Activated B cell treated with CpG ODN at 0.5 μM for 24 hours (primary cell): ENCODE measurements at regions of chr16 and their contacts with region 1.

Region 1: GRCh38 chr16:68229431-68230198 is 6.3 kb downstream of the ESRP2 start:
- DNase-seq: no peak
- ATAC-seq: peak; percentile 63
- H3K4me3 Mint-ChIP-seq: no peak overlapping the region
- H3K27ac Mint-ChIP-seq: peak overlapping the region; percentile 41
- H3K4me1 Mint-ChIP-seq: peaks cover 35% of the 10 kb centered on the region
- H3K27me3 Mint-ChIP-seq: no peaks in the 10 kb centered on the region
- CTCF ChIP-seq: peak; percentile 29

Region 2: DNA sequence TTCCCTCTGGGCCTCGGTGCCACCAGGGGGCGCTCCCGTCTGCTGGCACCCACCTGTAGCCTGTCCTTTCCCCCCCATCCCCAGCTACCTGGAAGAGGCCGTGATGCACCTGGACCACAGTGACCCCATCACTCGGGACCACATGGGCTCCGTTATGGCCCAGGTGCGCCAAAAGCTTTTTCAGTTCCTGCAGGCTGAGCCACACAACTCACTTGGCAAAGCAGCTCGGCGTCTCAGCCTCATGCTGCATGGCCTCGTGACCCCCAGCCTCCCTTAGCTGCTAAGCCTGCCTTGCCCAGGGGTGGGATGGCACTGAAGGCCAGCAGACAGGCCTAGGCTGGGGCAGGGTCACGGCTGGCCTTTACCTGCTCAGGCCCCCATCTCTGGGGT is 345.7 kb before region 1 on chr16:
- CTCF ChIA-PET with region 1: interaction called, 12 read pairs
- POLR2A ChIA-PET with region 1: no interaction called
- intact Hi-C with region 1: loop called (anchors 1 kb)
- DNase-seq: peak; percentile 75
- ATAC-seq: peak; percentile 90
- H3K4me3 Mint-ChIP-seq: no peak overlapping the region
- H3K27ac Mint-ChIP-seq: no peak overlapping the region
- H3K4me1 Mint-ChIP-seq: no peaks in the 10 kb centered on the region
- H3K27me3 Mint-ChIP-seq: no peaks in the 10 kb centered on the region
- CTCF ChIP-seq: peak; percentile 63

Region 3: GRCh38 chr16:67928561-67929364 is 300.9 kb before region 1 on chr16:
- CTCF ChIA-PET with region 1: no interaction called
- POLR2A ChIA-PET with region 1: no interaction called
- intact Hi-C with region 1: loop called (anchors 2 kb)
- DNase-seq: peak; percentile 64
- ATAC-seq: peak; percentile 90
- H3K4me3 Mint-ChIP-seq: no peak overlapping the region
- H3K27ac Mint-ChIP-seq: no peak overlapping the region
- H3K4me1 Mint-ChIP-seq: peaks cover 36% of the 10 kb centered on the region
- H3K27me3 Mint-ChIP-seq: no peaks in the 10 kb centered on the region
- CTCF ChIP-seq: peak; percentile 43

Region 4: DNA sequence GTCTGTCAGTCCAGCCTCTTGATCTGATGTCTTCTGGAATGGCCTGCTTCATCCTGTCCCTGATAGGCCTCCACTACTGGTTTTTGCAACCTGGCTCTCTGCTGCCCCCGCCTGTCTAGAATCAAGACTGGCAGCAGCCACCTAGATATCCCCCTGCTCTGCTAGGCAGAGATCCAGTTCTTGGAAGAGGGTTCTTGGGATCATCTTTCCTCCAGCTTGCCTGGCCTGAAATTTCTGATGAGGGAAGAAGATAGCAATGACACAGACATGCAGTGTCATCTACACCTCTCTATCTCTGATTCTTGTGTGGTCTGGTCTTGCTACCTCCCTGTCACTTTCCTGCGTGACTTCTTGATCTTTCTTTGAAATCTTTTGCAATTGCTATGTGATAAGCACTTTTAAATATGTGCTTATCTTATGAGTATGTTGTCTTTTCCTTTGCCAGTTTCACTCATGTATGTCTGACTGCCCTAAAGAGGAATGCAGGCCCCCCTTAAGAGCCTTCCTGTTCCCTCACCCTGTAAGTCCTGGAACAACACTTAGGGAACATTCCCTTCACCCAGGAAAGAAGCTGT is 164.7 kb before region 1 on chr16:
- CTCF ChIA-PET with region 1: interaction called, 6 read pairs
- POLR2A ChIA-PET with region 1: no interaction called
- intact Hi-C with region 1: loop called (anchors 1 kb)
- DNase-seq: peak; percentile 52
- ATAC-seq: peak; percentile 93
- H3K4me3 Mint-ChIP-seq: no peak overlapping the region
- H3K27ac Mint-ChIP-seq: no peak overlapping the region
- H3K4me1 Mint-ChIP-seq: peaks cover 27% of the 10 kb centered on the region
- H3K27me3 Mint-ChIP-seq: no peaks in the 10 kb centered on the region
- CTCF ChIP-seq: no peak

Region 5: GRCh38 chr16:68093816-68094613 is 135.6 kb before region 1 on chr16:
- CTCF ChIA-PET with region 1: interaction called, 42 read pairs
- POLR2A ChIA-PET with region 1: interaction called, 3 read pairs
- intact Hi-C with region 1: loop called (anchors 1 kb)
- DNase-seq: no peak
- ATAC-seq: peak; percentile 67
- H3K4me3 Mint-ChIP-seq: peak overlapping the region; percentile 6
- H3K27ac Mint-ChIP-seq: peak overlapping the region; percentile 65
- H3K4me1 Mint-ChIP-seq: peaks cover 87% of the 10 kb centered on the region
- H3K27me3 Mint-ChIP-seq: no peaks in the 10 kb centered on the region
- CTCF ChIP-seq: no peak

Region 6: GRCh38 chr16:69476920-69477418 is 1247.4 kb after region 1 on chr16:
- CTCF ChIA-PET with region 1: no interaction called
- POLR2A ChIA-PET with region 1: no interaction called
- intact Hi-C with region 1: no loop called
- DNase-seq: no peak
- ATAC-seq: no peak
- H3K4me3 Mint-ChIP-seq: no peak overlapping the region
- H3K27ac Mint-ChIP-seq: no peak overlapping the region
- H3K4me1 Mint-ChIP-seq: peaks cover 12% of the 10 kb centered on the region
- H3K27me3 Mint-ChIP-seq: no peaks in the 10 kb centered on the region
- CTCF ChIP-seq: no peak